Heart right ventricle (tissue), 16 donors: ENCODE measurements at regions of chr10 and their contacts with region 1.

Region 1: GRCh38 chr10:122374870-122375678 is 566 bp downstream of the PLEKHA1 start:
- DNase-seq: peak; percentile 50 to 59
- ATAC-seq: peak; percentile 14 to 60 (median 40)
- H3K4me3 ChIP-seq: peak overlapping the region; percentile 52 to 95 (median 82)
- H3K27ac ChIP-seq: peak overlapping the region; percentile 95 to 99 (median 98)
- H3K4me1 ChIP-seq: peaks cover 0 to 73% (median 54%) of the 10 kb centered on the region in 9 donors
- H3K27me3 ChIP-seq: peaks cover 0 to 13% (median 0%) of the 10 kb centered on the region in 7 donors
- CTCF ChIP-seq: no peak

Region 2: GRCh38 chr10:122232769-122233168 is 142.3 kb before region 1 on chr10:
- intact Hi-C with region 1: no loop called
- DNase-seq: no peak
- ATAC-seq: no peak
- H3K4me3 ChIP-seq: no peak overlapping the region
- H3K27ac ChIP-seq: no peak overlapping the region
- H3K4me1 ChIP-seq: peaks cover 0 to 24% (median 6%) of the 10 kb centered on the region in 9 donors
- H3K27me3 ChIP-seq: no peaks in the 10 kb centered on the region
- CTCF ChIP-seq: no peak

Region 3: GRCh38 chr10:122419876-122420623 is 45.0 kb after region 1 on chr10:
- intact Hi-C with region 1: loop called in 1 of 10 experiments (anchors 5 kb)
- DNase-seq: no peak
- ATAC-seq: peak in 4 of 8 donors; percentile 40 to 63 (median 52)
- H3K4me3 ChIP-seq: no peak overlapping the region
- H3K27ac ChIP-seq: peak overlapping the region in 1 of 10 donors; percentile 53
- H3K4me1 ChIP-seq: peaks cover 0 to 66% (median 30%) of the 10 kb centered on the region in 9 donors
- H3K27me3 ChIP-seq: no peaks in the 10 kb centered on the region
- CTCF ChIP-seq: no peak